ENCODE measurements at regions of chr6 and their contacts with region 1.

Region 1: DNA sequence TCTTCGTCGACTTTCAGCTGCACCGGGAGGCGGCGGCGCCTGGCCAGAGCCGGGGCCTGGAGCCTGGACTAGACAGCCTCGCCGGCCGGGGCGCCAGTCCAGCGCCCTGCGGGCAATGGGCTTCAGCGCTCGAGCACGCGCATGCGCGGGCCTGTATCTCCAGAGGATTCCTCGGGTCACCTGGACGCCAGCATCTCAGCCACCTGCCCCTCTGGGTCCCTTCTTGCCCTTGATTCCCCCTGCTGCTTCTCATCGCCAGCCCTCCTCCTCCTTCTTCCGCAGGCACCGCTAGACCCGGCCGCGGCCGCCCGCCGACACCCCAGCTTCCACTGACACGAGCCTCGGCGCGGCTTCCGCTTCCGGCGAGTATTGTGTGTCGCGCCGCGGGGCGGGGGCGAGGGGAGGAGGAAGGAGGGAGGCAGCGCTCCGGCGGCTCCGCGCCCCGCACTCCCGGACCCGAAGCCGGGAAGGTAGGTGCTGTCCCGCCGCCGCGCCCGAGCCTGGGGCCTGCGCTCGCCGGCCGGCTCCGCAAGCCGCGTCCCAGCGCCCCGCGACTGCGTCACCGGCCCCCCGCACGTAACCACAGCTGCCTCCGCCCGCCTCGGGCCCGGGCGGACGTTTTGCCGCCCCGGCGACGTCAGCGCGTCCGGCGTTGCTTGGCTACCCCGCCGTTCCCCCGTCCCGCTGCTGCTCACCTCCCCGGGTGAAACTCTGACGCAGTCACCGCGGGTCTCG is at the start of gene TRIM39:
- DNase-seq: peak; percentile 54
- H3K4me3 ChIP-seq: peak within 1 kb of the TSS; percentile 75 to 78 (median 76)
- H3K27ac ChIP-seq: peak within 1 kb of the TSS; percentile 99
- H3K4me1 ChIP-seq: peaks cover 34% of the 10 kb centered on the region
- H3K27me3 ChIP-seq: no peaks in the 10 kb centered on the region
- CTCF ChIP-seq: no peak
- polyA plus RNA-seq, gene TRIM39: 6.4 to 7.9 TPM (median 7.4 TPM) in 3 replicates

Region 2: DNA sequence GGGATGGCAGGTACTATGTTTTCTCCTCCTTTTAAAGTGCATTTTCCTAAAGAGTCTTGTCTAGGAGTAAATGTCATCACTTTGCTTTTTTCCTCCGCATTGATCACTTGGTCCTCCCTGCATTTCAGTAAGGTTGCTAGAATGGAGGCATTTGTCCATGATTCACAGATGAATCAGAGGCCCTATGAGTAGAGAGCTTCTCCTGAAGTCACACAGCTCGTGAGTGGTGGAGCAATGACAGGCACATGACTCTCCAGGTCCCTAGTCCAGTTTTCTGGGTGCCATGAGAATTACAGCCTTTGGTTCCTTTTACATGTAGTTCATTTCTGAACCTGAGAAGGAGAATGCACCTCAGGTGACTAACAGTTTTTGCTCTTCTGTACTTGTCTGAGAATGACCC is 333.9 kb before region 1 on chr6:
- dilution Hi-C with region 1: no loop called
- DNase-seq: peak; percentile 25
- H3K4me3 ChIP-seq: no peak overlapping the region
- H3K27ac ChIP-seq: no peak overlapping the region
- H3K4me1 ChIP-seq: peaks cover 5% of the 10 kb centered on the region
- H3K27me3 ChIP-seq: no peaks in the 10 kb centered on the region
- CTCF ChIP-seq: no peak

Region 3: DNA sequence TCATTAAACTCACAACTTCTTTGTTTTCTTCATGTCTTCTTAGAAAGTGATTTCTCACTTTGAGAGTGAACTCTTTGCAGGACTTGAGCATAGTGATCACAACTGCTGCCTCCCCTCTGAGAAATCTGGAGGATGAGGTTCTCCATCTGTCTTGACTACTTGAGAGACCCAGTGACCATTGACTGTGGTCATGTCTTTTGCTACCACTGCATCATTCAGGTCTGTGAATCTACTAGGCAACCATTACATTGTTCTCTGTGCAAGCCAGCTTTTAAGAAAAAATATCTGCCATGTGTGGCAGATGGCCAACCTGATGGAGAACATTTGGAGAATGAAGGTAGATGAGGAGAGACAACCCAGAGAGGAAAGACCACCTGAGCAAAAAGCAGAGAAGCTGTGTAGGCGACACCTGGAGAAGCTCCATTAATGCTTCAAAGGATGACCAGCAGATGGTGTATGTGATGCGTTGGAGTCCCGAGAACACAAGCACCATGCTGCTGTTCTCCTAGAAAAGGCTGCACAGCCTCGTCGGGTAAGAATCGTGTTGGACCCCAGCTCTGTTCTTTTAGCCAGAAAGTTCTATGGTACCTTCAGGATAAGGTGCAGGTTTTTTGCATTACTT is 88.4 kb before region 1 on chr6:
- dilution Hi-C with region 1: loop called (anchors 25 kb)
- DNase-seq: no peak
- H3K4me3 ChIP-seq: no peak overlapping the region
- H3K27ac ChIP-seq: no peak overlapping the region
- H3K4me1 ChIP-seq: no peaks in the 10 kb centered on the region
- H3K27me3 ChIP-seq: peaks cover 4% of the 10 kb centered on the region
- CTCF ChIP-seq: peak; percentile 46 to 70 (median 58)

Measured in keratinocyte (primary cell).